Activated CD4-positive, alpha-beta T cell treated with anti-CD3 and anti-CD28 coated beads for 36 hours (primary cell): ENCODE measurements at regions of chr16 and their contacts with region 1.

Region 1: GRCh38 chr16:8868416-8869211 is at the start of gene CARHSP1:
- DNase-seq: peak; percentile 92
- ATAC-seq: peak; percentile 72
- H3K4me3 Mint-ChIP-seq: peak within 1 kb of the TSS; percentile 87
- H3K27ac Mint-ChIP-seq: peak within 1 kb of the TSS; percentile 92
- H3K4me1 Mint-ChIP-seq: peaks cover 40% of the 10 kb centered on the region
- H3K27me3 Mint-ChIP-seq: no peaks in the 10 kb centered on the region
- total RNA-seq, gene CARHSP1: 49.4 to 64.5 TPM

Region 2: GRCh38 chr16:7458144-7458543 is 1410.5 kb before region 1 on chr16:
- CTCF ChIA-PET with region 1: no interaction called
- POLR2A ChIA-PET with region 1: no interaction called
- intact Hi-C with region 1: no loop called
- DNase-seq: no peak
- ATAC-seq: no peak
- H3K4me3 Mint-ChIP-seq: no peak overlapping the region
- H3K27ac Mint-ChIP-seq: no peak overlapping the region
- H3K4me1 Mint-ChIP-seq: no peaks in the 10 kb centered on the region
- H3K27me3 Mint-ChIP-seq: no peaks in the 10 kb centered on the region

Region 3: GRCh38 chr16:8283195-8283594 is 585.4 kb before region 1 on chr16:
- CTCF ChIA-PET with region 1: no interaction called
- POLR2A ChIA-PET with region 1: no interaction called
- intact Hi-C with region 1: no loop called
- DNase-seq: no peak
- ATAC-seq: no peak
- H3K4me3 Mint-ChIP-seq: no peak overlapping the region
- H3K27ac Mint-ChIP-seq: no peak overlapping the region
- H3K4me1 Mint-ChIP-seq: no peaks in the 10 kb centered on the region
- H3K27me3 Mint-ChIP-seq: no peaks in the 10 kb centered on the region

Region 4: DNA sequence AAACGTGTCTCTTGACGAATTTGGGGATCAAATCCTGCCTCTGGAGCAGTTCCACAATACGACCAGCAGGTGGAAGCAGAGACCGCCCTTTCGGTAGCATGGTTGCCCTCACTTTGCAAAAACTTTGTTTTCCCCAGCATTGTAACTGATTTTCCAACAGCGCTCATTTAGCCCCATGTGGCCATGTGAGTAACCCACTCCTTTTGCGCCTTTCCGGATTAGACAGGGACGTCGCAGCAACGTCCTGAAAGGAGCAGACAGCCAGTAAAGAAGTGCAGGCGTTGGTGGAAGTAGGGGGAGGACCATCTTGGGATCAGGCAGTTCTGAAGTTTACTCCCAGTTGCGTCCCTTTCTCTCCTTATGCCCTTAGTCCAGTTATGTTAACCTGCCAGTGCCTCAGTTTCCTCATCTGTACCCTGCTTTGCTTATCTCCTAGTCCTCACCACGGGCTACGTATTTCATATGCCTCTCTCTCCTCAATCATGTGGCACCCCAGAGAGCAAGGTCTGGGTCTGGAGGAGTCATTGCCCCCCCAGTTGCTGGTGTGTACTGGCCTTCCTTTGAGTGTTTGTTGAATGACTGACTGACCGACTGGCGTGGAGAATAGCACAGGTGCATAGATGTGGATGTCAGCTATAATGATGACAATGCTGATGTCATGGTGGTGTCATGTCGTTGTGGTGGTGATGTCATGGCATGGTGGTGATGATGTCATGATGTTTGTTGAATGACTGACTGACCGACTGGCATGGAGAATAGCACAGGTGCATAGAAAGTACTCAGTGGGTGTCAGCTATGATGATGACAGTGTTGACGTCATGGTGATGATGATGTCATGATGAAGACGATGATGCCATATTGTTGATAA is 300.6 kb before region 1 on chr16:
- CTCF ChIA-PET with region 1: interaction called, 3 read pairs
- POLR2A ChIA-PET with region 1: no interaction called
- intact Hi-C with region 1: loop called (anchors 2 to 5 kb)
- DNase-seq: peak; percentile 87
- ATAC-seq: peak; percentile 94
- H3K4me3 Mint-ChIP-seq: no peak overlapping the region
- H3K27ac Mint-ChIP-seq: no peak overlapping the region
- H3K4me1 Mint-ChIP-seq: peaks cover 4% of the 10 kb centered on the region
- H3K27me3 Mint-ChIP-seq: peaks cover 9% of the 10 kb centered on the region

Region 5: GRCh38 chr16:8621572-8622314 is 246.9 kb before region 1 on chr16 and contains the start of gene METTL22:
- CTCF ChIA-PET with region 1: no interaction called
- POLR2A ChIA-PET with region 1: no interaction called
- intact Hi-C with region 1: loop called in 1 of 2 experiments (anchors 1 kb)
- DNase-seq: peak; percentile 96
- ATAC-seq: peak; percentile 98
- H3K4me3 Mint-ChIP-seq: peak within 1 kb of the TSS; percentile 91
- H3K27ac Mint-ChIP-seq: peak within 1 kb of the TSS; percentile 87
- H3K4me1 Mint-ChIP-seq: peaks cover 28% of the 10 kb centered on the region
- H3K27me3 Mint-ChIP-seq: peaks cover 3% of the 10 kb centered on the region
- total RNA-seq, gene METTL22: 32.3 to 45.8 TPM

Region 6: DNA sequence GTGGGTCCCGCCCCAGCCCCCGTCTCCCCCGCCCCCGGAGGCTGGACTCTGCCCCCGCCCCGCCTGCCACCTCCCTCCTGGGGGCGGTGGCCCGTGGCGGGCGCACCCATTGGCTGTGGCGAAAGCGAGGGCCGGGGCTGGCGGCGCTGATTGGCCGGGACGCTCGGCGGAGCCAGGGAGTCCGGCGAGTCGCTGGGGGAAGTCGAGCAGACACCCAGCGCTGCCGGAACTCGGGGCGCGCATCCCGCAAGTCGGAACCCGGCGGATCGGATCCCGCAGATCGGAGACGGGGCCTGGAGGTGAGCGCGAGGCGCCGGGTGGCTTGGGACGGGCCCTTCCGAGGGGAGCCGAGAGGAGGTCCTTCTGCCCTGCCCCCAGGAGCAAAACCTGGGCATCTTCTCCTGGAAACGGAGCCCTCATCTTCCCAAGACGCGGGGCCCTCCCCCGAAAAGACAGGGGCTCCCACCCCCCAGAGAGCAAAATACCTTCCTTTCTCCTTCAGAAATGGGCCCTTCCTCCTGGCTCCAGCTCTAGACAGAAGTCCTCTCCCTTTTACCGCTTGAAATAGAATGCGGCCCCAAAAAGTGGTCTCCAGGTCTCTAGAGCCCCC is 194.1 kb before region 1 on chr16 and contains the start of gene ABAT:
- CTCF ChIA-PET with region 1: no interaction called
- POLR2A ChIA-PET with region 1: interaction called, 3 read pairs
- intact Hi-C with region 1: loop called in 1 of 2 experiments (anchors 1 kb)
- DNase-seq: peak; percentile 93
- ATAC-seq: peak; percentile 96
- H3K4me3 Mint-ChIP-seq: peak within 1 kb of the TSS; percentile 83
- H3K27ac Mint-ChIP-seq: peak within 1 kb of the TSS; percentile 92
- H3K4me1 Mint-ChIP-seq: peaks cover 18% of the 10 kb centered on the region
- H3K27me3 Mint-ChIP-seq: no peaks in the 10 kb centered on the region
- total RNA-seq, gene ABAT: 5.4 to 6.0 TPM

Region 7: DNA sequence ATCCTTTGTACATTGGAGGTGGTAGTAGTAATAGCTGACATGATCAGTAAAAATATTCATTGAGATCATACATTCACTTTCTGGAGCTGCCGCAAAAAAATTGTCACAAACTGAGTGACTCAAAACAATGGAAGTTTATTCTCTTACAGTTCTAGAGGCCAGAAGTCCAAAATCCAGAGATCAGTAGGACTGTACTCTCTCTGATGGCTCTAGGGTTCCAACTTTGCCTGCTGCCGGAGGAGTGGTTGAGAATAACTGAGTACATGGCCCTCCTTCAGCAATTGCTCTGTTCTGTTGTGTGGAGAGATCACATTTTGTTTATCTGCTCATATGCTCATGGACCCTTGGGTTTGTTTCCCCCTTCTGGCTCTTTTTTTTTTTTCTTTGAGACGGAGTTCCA is 170.6 kb before region 1 on chr16:
- CTCF ChIA-PET with region 1: no interaction called
- POLR2A ChIA-PET with region 1: no interaction called
- intact Hi-C with region 1: no loop called
- DNase-seq: no peak
- ATAC-seq: no peak
- H3K4me3 Mint-ChIP-seq: no peak overlapping the region
- H3K27ac Mint-ChIP-seq: no peak overlapping the region
- H3K4me1 Mint-ChIP-seq: no peaks in the 10 kb centered on the region
- H3K27me3 Mint-ChIP-seq: no peaks in the 10 kb centered on the region

Region 8: GRCh38 chr16:8855011-8855786 is 13.4 kb before region 1 on chr16:
- CTCF ChIA-PET with region 1: interaction called, 3 read pairs
- POLR2A ChIA-PET with region 1: interaction called, 8 read pairs
- intact Hi-C with region 1: loop called in 1 of 2 experiments (anchors 2 kb)
- DNase-seq: peak; percentile 42
- ATAC-seq: no peak
- H3K4me3 Mint-ChIP-seq: no peak overlapping the region
- H3K27ac Mint-ChIP-seq: peak overlapping the region; percentile 51
- H3K4me1 Mint-ChIP-seq: peaks cover 22% of the 10 kb centered on the region
- H3K27me3 Mint-ChIP-seq: no peaks in the 10 kb centered on the region

Region 9: GRCh38 chr16:8885674-8886592 is 17.3 kb after region 1 on chr16:
- CTCF ChIA-PET with region 1: interaction called, 22 read pairs
- POLR2A ChIA-PET with region 1: interaction called, 10 read pairs
- intact Hi-C with region 1: no loop called
- DNase-seq: no peak
- ATAC-seq: peak; percentile 7
- H3K4me3 Mint-ChIP-seq: no peak overlapping the region
- H3K27ac Mint-ChIP-seq: no peak overlapping the region
- H3K4me1 Mint-ChIP-seq: peaks cover 7% of the 10 kb centered on the region
- H3K27me3 Mint-ChIP-seq: peaks cover 3% of the 10 kb centered on the region